ENCODE measurements at regions of chr2 and their contacts with region 1.

Region 1: DNA sequence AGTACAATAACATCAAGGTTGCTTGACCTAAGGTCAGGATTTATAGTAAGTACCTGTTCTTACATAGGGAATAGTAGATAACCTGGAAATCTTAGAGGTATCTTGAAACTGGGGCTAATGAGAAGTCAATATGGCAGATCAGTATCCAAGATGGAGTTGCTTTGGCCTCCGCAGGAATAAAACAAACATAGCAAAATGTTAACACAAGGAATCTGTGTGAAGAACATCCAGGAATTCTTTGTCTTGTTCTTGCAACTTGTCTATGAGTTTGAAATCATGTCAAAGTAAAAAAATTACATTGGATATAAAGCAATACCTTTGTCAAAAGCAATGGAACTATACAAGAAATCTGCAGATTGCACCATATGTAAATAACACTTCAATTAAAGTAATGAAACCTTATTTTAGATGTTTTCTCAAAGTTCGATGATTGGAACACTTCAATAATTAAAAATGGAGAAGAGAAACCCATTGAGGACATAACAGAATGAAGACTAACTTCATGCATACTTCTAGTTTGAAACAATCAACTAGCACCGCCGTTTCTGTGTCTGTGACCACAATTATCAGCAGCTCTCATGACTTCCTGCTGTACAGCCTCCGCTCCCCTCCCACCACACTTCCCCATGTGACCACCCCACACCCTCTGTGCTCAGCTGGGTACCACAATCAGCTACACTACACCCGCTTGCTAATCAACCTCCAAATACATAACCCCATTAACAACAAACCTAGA is 27.6 kb downstream of the C2orf76 start:
- DNase-seq: peak; percentile 66 to 73
- ATAC-seq: peak; percentile 99 to 100 (median 100)
- H3K4me3 ChIP-seq: no peak overlapping the region
- H3K4me3 Mint-ChIP-seq: peak overlapping the region; percentile 59
- H3K27ac ChIP-seq: peak overlapping the region; percentile 59
- H3K27ac Mint-ChIP-seq: peak overlapping the region; percentile 89
- H3K4me1 ChIP-seq: peaks cover 21% of the 10 kb centered on the region
- H3K4me1 Mint-ChIP-seq: peaks cover 33 to 34% of the 10 kb centered on the region in 2 donors
- H3K27me3 ChIP-seq: no peaks in the 10 kb centered on the region
- H3K27me3 Mint-ChIP-seq: no peaks in the 10 kb centered on the region
- CTCF ChIP-seq: no peak

Region 2: GRCh38 chr2:119366649-119367471 is 27.9 kb after region 1 on chr2 and contains the starts of genes C2orf76 and DBI:
- intact Hi-C with region 1: loop called (anchors 1 kb)
- DNase-seq: peak; percentile 91 to 96
- ATAC-seq: peak; percentile 89 to 97 (median 92)
- H3K4me3 ChIP-seq: peak within 1 kb of the TSS; percentile 92
- H3K4me3 Mint-ChIP-seq: peak within 1 kb of the TSS; percentile 95
- H3K27ac ChIP-seq: peak within 1 kb of the TSS; percentile 85
- H3K27ac Mint-ChIP-seq: peak within 1 kb of the TSS; percentile 95 to 100
- H3K4me1 ChIP-seq: peaks cover 25% of the 10 kb centered on the region
- H3K4me1 Mint-ChIP-seq: peaks cover 54 to 86% of the 10 kb centered on the region in 2 donors
- H3K27me3 ChIP-seq: no peaks in the 10 kb centered on the region
- H3K27me3 Mint-ChIP-seq: no peaks in the 10 kb centered on the region
- CTCF ChIP-seq: no peak
- total RNA-seq, gene C2orf76: 14.1 to 21.9 (median 20.5) TPM
- total RNA-seq, gene DBI: 85.1 to 109 (median 93.2) TPM

Measured in natural killer cell (primary cell).